Ovary (tissue), 10 donors: ENCODE measurements at regions of chr13 and their contacts with region 1.

Region 1: GRCh38 chr13:101331731-101332130 is 84.6 kb downstream of the NALCN start:
- DNase-seq: no peak
- H3K4me3 ChIP-seq: no peak overlapping the region
- H3K27ac ChIP-seq: no peak overlapping the region
- H3K4me1 ChIP-seq: no peaks in the 10 kb centered on the region
- H3K27me3 ChIP-seq: no peaks in the 10 kb centered on the region
- CTCF ChIP-seq: no peak
- EP300 ChIP-seq: no peak
- POLR2A ChIP-seq: no peak

Region 2: DNA sequence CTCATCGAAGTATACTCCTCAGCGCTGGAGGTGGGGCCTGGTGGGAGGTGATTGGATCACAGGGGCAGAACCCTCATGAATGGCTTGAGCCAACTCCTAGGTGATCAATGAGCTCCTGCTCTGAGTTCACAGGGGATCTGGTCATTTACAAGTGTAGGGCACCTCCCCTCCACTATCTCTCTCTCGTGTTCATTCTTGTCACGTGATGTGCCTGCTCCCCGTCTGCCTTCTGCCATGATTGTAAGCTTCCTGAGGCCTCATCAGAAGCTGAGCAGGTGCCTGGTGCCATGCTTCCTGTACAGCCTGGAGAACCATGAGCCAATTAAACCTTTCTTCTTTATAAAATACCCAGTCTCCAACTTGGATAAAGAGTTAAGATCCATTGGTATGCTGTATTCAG is 23.2 kb after region 1 on chr13:
- intact Hi-C with region 1: loop called in 1 of 4 experiments (anchors 1 kb)
- DNase-seq: no peak
- H3K4me3 ChIP-seq: no peak overlapping the region
- H3K27ac ChIP-seq: no peak overlapping the region
- H3K4me1 ChIP-seq: no peaks in the 10 kb centered on the region
- H3K27me3 ChIP-seq: no peaks in the 10 kb centered on the region
- CTCF ChIP-seq: no peak
- EP300 ChIP-seq: no peak
- POLR2A ChIP-seq: no peak